ENCODE measurements at regions of chr4 and their contacts with region 1.

Region 1: GRCh38 chr4:168183717-168184608 is 91.6 kb downstream of the ANXA10 start:
- DNase-seq: peak in 4 of 9 donors; percentile 1 to 23 (median 8)
- ATAC-seq: no peak
- H3K4me3 ChIP-seq: no peak overlapping the region
- H3K4me3 Mint-ChIP-seq: no peak overlapping the region
- H3K27ac ChIP-seq: no peak overlapping the region
- H3K27ac Mint-ChIP-seq: no peak overlapping the region
- H3K4me1 ChIP-seq: no peaks in the 10 kb centered on the region
- H3K4me1 Mint-ChIP-seq: peaks cover 0 to 6% (median 0%) of the 10 kb centered on the region in 7 donors
- H3K27me3 ChIP-seq: no peaks in the 10 kb centered on the region
- H3K27me3 Mint-ChIP-seq: peaks cover 0 to 6% (median 0%) of the 10 kb centered on the region in 5 donors

Region 2: DNA sequence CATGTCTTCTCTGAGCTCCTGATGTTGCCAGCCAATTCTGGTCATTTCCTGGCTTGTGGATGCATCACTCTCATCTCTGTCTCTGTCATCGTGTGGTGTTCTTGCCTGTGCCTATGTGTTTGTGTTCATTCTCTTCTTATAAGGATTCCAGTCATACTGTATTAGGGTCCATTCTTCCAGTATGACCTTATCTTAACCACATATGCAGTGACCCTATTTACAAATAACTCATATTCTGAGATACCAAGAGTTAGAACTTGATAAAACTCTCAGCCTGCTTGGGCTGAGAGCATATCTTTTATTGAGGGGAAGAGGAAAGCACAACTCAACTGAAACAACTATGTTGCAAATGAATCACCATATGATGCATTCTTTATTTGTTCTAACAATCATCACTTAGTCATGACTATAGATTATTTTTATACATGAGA is 280.7 kb before region 1 on chr4:
- CTCF ChIA-PET with region 1: no interaction called
- POLR2A ChIA-PET with region 1: no interaction called
- intact Hi-C with region 1: no loop called
- DNase-seq: no peak
- ATAC-seq: no peak
- H3K4me3 ChIP-seq: no peak overlapping the region
- H3K4me3 Mint-ChIP-seq: no peak overlapping the region
- H3K27ac ChIP-seq: no peak overlapping the region
- H3K27ac Mint-ChIP-seq: no peak overlapping the region
- H3K4me1 ChIP-seq: no peaks in the 10 kb centered on the region
- H3K4me1 Mint-ChIP-seq: no peaks in the 10 kb centered on the region
- H3K27me3 ChIP-seq: no peaks in the 10 kb centered on the region
- H3K27me3 Mint-ChIP-seq: no peaks in the 10 kb centered on the region

Region 3: DNA sequence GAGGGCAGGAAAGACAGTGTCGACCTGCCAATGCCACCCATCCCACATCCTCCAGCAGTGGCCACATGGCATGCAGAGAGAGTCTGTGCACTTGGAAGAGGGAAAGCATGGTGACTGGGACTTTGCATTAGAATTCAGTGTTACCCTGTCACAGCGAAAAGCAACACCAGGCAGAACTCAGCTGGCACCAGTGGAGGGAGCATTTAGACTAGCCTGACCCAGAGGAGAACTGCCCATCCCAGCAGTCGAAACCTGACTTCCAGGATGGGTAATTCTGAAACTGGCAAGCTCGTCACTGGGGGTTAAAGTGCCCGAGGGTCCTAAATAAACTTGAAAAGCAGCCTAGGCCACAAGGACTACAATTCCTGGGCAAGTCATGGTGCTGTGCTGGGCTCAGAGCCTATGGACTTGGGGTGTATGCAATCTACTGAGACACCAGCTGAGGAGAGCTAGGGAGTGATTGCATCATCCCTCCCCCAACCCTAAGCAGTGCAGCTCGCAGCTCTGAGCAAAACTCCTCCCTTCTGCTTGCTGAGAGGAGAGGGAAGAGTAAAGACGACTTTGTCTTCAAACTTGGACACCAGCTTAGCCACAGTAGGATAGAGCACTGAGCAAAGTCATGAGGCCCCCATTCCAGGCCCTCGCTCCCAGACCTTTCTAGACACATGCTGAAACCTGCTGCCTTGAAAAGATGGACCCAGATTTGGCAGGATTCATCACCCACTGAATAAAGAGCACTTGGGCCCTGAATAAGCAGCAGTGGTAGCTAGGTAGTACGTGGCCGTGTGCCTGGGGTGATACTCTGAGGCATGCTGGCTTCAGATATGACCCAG is 227.6 kb after region 1 on chr4:
- CTCF ChIA-PET with region 1: no interaction called
- POLR2A ChIA-PET with region 1: no interaction called
- intact Hi-C with region 1: no loop called
- DNase-seq: no peak
- ATAC-seq: no peak
- H3K4me3 ChIP-seq: no peak overlapping the region
- H3K4me3 Mint-ChIP-seq: no peak overlapping the region
- H3K27ac ChIP-seq: no peak overlapping the region
- H3K27ac Mint-ChIP-seq: peak overlapping the region in 1 of 9 donors; percentile 26
- H3K4me1 ChIP-seq: no peaks in the 10 kb centered on the region
- H3K4me1 Mint-ChIP-seq: peaks cover 0 to 5% (median 0%) of the 10 kb centered on the region in 7 donors
- H3K27me3 ChIP-seq: no peaks in the 10 kb centered on the region
- H3K27me3 Mint-ChIP-seq: no peaks in the 10 kb centered on the region

Region 4: DNA sequence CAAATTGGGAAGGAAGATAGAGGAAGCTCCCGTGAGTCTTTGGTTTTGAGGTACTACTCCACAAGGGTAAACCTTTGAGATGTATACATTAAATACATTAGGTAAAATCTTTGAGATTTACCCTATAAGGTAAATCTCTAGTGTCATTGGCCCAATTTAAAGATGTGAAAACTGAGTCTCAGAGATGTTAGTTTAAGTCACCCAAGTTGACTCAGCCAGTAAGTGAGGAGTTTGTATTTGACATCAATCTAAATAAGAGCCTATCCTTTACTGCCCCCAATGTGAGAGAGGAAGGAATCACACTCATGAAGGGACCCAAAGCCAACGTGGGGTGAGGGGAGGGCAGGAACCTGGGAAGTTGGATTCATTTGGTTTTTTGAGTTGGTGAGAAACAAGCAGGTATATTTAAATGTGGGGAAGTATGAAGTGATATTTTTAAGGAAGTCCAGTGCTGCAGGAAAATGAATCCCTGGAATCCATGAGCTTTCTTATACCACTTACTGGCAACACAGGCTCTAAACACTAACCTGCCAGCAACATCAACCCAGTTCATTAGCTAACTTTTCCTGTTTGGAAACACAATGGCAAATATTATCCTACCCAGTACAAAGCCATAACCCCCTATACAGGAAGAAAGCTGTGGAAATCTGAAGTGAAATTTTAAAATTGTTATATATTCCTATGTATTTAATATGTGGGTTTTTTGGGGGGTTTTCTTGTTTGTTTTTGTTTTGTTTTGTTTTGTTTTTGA is 368.2 kb after region 1 on chr4:
- CTCF ChIA-PET with region 1: no interaction called
- POLR2A ChIA-PET with region 1: no interaction called
- intact Hi-C with region 1: loop called in 1 of 2 experiments (anchors 5 kb)
- DNase-seq: peak in 6 of 9 donors; percentile 8 to 38 (median 23)
- ATAC-seq: peak; percentile 57
- H3K4me3 ChIP-seq: no peak overlapping the region
- H3K4me3 Mint-ChIP-seq: no peak overlapping the region
- H3K27ac ChIP-seq: no peak overlapping the region
- H3K27ac Mint-ChIP-seq: no peak overlapping the region
- H3K4me1 ChIP-seq: no peaks in the 10 kb centered on the region
- H3K4me1 Mint-ChIP-seq: no peaks in the 10 kb centered on the region
- H3K27me3 ChIP-seq: no peaks in the 10 kb centered on the region
- H3K27me3 Mint-ChIP-seq: peaks cover 0 to 9% (median 4%) of the 10 kb centered on the region in 5 donors

Region 5: DNA sequence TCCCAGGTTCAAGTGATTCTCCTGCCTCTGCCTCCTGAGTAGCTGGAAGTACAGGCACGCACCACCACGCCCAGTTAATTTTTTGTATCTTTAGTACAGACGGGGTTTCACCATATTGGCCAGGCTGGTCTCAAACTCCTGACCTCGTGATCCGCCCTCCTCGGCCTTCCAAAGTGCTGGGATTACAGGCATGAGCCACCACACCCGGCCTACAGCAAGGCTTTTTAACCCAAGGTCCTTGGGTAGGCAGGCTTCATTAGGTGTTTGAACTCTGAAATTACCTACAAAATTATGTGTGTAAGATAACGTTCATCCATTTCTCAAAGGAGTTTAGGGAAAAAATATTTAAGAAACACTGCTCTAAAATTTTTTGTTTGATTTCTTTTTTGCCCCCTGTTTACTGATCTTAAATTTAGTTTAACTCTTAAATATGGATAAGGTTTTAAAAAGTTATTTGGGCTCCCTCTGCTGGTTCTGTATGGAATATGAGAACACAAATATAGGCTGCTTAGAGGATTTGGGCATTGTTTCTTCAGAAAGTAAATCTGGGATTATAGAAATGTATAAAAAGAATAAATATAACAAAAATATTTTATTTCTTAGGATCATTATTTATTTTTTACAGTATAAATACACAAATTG is 733.3 kb after region 1 on chr4:
- CTCF ChIA-PET with region 1: interaction called, 4 read pairs
- POLR2A ChIA-PET with region 1: no interaction called
- intact Hi-C with region 1: loop called in 1 of 2 experiments (anchors 1 kb)
- DNase-seq: peak in 2 of 9 donors; percentile 12
- ATAC-seq: no peak
- H3K4me3 ChIP-seq: no peak overlapping the region
- H3K4me3 Mint-ChIP-seq: no peak overlapping the region
- H3K27ac ChIP-seq: no peak overlapping the region
- H3K27ac Mint-ChIP-seq: no peak overlapping the region
- H3K4me1 ChIP-seq: no peaks in the 10 kb centered on the region
- H3K4me1 Mint-ChIP-seq: no peaks in the 10 kb centered on the region
- H3K27me3 ChIP-seq: no peaks in the 10 kb centered on the region
- H3K27me3 Mint-ChIP-seq: no peaks in the 10 kb centered on the region

Region 6: DNA sequence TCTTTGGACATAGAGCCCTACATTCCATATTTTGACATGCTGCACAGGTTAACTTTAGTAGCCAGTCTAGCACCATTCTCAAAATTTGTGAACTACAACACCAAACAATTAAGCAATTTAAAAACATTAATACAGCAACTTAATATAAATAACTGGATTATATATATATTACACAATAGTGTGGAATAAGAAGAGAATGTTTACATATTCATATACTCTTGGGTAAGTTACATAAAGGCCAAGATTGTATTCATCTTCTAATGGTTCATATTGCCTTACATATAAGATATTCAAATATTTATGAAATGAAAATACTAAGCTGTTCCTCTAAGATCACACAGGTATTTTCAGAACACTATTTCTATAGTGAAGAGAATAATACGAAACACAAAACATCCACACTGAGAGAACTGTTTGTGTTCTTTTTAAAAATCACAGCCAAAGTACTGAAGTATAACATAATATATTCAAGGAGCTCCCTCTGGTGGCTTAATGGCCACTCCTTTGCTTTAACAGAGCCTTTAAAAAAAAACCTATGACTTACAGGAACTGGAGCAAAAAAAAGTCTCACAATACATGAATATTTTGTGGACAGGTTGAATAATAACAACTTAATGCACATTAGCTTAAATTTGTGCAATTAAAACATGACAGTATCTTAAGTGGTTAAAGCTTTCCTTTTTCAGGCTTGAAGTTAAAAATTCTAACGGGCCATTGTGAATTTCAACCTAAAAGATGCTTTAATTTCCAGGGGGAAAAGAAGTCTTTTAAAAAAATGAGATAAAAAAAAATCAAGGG is 1382.3 kb after region 1 on chr4:
- CTCF ChIA-PET with region 1: no interaction called
- POLR2A ChIA-PET with region 1: no interaction called
- intact Hi-C with region 1: loop called in 1 of 2 experiments (anchors 1 kb)
- DNase-seq: peak in 6 of 9 donors; percentile 10 to 50 (median 34)
- ATAC-seq: peak; percentile 66
- H3K4me3 ChIP-seq: no peak overlapping the region
- H3K4me3 Mint-ChIP-seq: no peak overlapping the region
- H3K27ac ChIP-seq: no peak overlapping the region
- H3K27ac Mint-ChIP-seq: peak overlapping the region in 7 of 9 donors; percentile 40 to 84 (median 65)
- H3K4me1 ChIP-seq: no peaks in the 10 kb centered on the region
- H3K4me1 Mint-ChIP-seq: peaks cover 0 to 10% (median 5%) of the 10 kb centered on the region in 7 donors
- H3K27me3 ChIP-seq: no peaks in the 10 kb centered on the region
- H3K27me3 Mint-ChIP-seq: no peaks in the 10 kb centered on the region

Region 7: DNA sequence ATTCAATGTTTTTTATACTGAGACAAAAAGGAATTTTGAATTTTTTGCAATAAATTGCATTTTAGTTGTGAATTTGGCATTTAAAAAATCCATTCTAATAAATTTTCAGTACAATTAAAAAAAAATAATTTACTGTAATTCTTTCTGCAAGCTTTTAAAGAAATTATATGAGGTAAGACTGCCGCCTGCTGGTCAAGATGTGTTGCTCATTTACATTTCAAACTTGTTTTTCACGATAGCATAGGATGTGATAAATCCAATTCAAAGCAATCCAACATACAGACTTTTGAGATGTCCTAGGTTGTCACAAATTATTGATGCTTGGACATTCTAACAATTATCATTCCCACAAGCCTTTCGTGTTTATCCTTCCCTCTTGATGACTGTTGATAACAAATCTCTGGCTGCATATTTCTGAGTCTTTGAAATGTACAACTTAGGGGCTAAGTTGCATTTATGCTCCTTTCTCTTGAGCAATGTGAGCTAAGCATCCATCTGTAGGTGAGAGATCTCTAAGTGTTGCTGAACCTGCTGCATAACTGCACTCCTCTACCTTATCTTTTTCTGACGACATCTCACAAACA is 1863.9 kb after region 1 on chr4:
- CTCF ChIA-PET with region 1: no interaction called
- POLR2A ChIA-PET with region 1: no interaction called
- intact Hi-C with region 1: loop called in 1 of 2 experiments (anchors 10 kb)
- DNase-seq: peak; percentile 10 to 68 (median 51)
- ATAC-seq: peak; percentile 48
- H3K4me3 ChIP-seq: no peak overlapping the region
- H3K4me3 Mint-ChIP-seq: no peak overlapping the region
- H3K27ac ChIP-seq: no peak overlapping the region
- H3K27ac Mint-ChIP-seq: peak overlapping the region in 1 of 9 donors; percentile 77
- H3K4me1 ChIP-seq: no peaks in the 10 kb centered on the region
- H3K4me1 Mint-ChIP-seq: no peaks in the 10 kb centered on the region
- H3K27me3 ChIP-seq: no peaks in the 10 kb centered on the region
- H3K27me3 Mint-ChIP-seq: peaks cover 0 to 3% (median 0%) of the 10 kb centered on the region in 5 donors